B cell (primary cell): ENCODE measurements at regions of chr18 and their contacts with region 1.

Region 1: DNA sequence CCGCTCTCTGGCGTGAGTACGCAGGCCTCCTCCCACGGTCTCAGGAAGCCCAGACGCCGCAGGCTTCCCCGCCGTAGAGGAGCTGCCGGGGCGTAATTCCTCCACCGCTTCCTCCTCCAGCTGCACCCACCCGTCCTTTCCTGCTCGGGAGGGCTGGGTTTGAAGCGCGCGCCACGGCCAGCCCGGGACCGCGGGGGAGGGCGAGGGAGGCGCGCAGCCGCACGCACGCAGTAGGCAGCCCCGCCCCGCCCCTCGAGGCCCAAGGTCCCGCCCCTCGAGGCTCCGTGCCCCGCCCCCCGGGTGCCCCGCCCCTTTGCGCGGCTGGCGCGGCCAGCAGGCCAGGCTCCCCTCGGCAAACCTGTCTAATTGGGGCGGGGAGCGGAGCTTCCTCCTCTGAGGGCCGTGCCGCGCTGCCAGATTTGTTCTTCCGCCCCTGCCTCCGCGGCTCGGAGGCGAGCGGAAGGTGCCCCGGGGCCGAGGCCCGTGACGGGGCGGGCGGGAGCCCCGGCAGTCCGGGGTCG is at the start of gene MALT1:
- DNase-seq: peak; percentile 94
- ATAC-seq: peak; percentile 86
- H3K4me3 ChIP-seq: peak within 1 kb of the TSS; percentile 84 to 92 (median 87)
- H3K4me3 Mint-ChIP-seq: peak within 1 kb of the TSS; percentile 97
- H3K27ac ChIP-seq: peak within 1 kb of the TSS; percentile 73 to 88
- H3K27ac Mint-ChIP-seq: peak within 1 kb of the TSS; percentile 97
- H3K4me1 ChIP-seq: peaks cover 47 to 48% of the 10 kb centered on the region in 2 donors
- H3K4me1 Mint-ChIP-seq: peaks cover 63% of the 10 kb centered on the region
- H3K27me3 ChIP-seq: no peaks in the 10 kb centered on the region
- H3K27me3 Mint-ChIP-seq: no peaks in the 10 kb centered on the region
- CTCF ChIP-seq: no peak
- total RNA-seq, gene MALT1: 81.2 and 95.6 TPM in 2 replicates

Region 2: GRCh38 chr18:57258131-57258777 is 1412.9 kb before region 1 on chr18:
- CTCF ChIA-PET with region 1: no interaction called
- POLR2A ChIA-PET with region 1: no interaction called
- intact Hi-C with region 1: no loop called
- DNase-seq: no peak
- ATAC-seq: no peak
- H3K4me3 ChIP-seq: no peak overlapping the region
- H3K4me3 Mint-ChIP-seq: no peak overlapping the region
- H3K27ac ChIP-seq: no peak overlapping the region
- H3K27ac Mint-ChIP-seq: no peak overlapping the region
- H3K4me1 ChIP-seq: no peaks in the 10 kb centered on the region
- H3K4me1 Mint-ChIP-seq: no peaks in the 10 kb centered on the region
- H3K27me3 ChIP-seq: no peaks in the 10 kb centered on the region
- H3K27me3 Mint-ChIP-seq: peaks cover 12% of the 10 kb centered on the region
- CTCF ChIP-seq: no peak

Region 3: GRCh38 chr18:58535340-58536201 is 135.6 kb before region 1 on chr18:
- CTCF ChIA-PET with region 1: interaction called, 40 read pairs
- POLR2A ChIA-PET with region 1: interaction called, 5 read pairs
- intact Hi-C with region 1: loop called (anchors 2 kb)
- DNase-seq: peak; percentile 90
- ATAC-seq: peak; percentile 73
- H3K4me3 ChIP-seq: peak overlapping the region in 1 of 5 experiments; percentile 11
- H3K4me3 Mint-ChIP-seq: peak overlapping the region; percentile 82
- H3K27ac ChIP-seq: peak overlapping the region in 1 of 2 donors; percentile 57
- H3K27ac Mint-ChIP-seq: peak overlapping the region; percentile 77
- H3K4me1 ChIP-seq: peaks cover 47% of the 10 kb centered on the region in 2 donors
- H3K4me1 Mint-ChIP-seq: peaks cover 62% of the 10 kb centered on the region
- H3K27me3 ChIP-seq: no peaks in the 10 kb centered on the region
- H3K27me3 Mint-ChIP-seq: no peaks in the 10 kb centered on the region
- CTCF ChIP-seq: no peak

Region 4: GRCh38 chr18:58552057-58552461 is 119.1 kb before region 1 on chr18:
- CTCF ChIA-PET with region 1: interaction called, 3 read pairs
- POLR2A ChIA-PET with region 1: interaction called, 3 read pairs
- intact Hi-C with region 1: loop called (anchors 1 kb)
- DNase-seq: peak; percentile 83
- ATAC-seq: peak; percentile 80
- H3K4me3 ChIP-seq: no peak overlapping the region
- H3K4me3 Mint-ChIP-seq: peak overlapping the region; percentile 60
- H3K27ac ChIP-seq: peak overlapping the region in 1 of 2 donors; percentile 9
- H3K27ac Mint-ChIP-seq: peak overlapping the region; percentile 50
- H3K4me1 ChIP-seq: peaks cover 30 to 37% of the 10 kb centered on the region in 2 donors
- H3K4me1 Mint-ChIP-seq: peaks cover 40% of the 10 kb centered on the region
- H3K27me3 ChIP-seq: no peaks in the 10 kb centered on the region
- H3K27me3 Mint-ChIP-seq: no peaks in the 10 kb centered on the region
- CTCF ChIP-seq: no peak

Region 5: GRCh38 chr18:58649966-58650816 is 21.0 kb before region 1 on chr18:
- CTCF ChIA-PET with region 1: interaction called, 61 read pairs
- POLR2A ChIA-PET with region 1: interaction called, 3 read pairs
- intact Hi-C with region 1: loop called (anchors 2 kb)
- DNase-seq: peak; percentile 85
- ATAC-seq: peak; percentile 90
- H3K4me3 ChIP-seq: peak overlapping the region in 4 of 5 experiments; percentile 12 to 59 (median 19)
- H3K4me3 Mint-ChIP-seq: peak overlapping the region; percentile 61
- H3K27ac ChIP-seq: peak overlapping the region; percentile 48 to 69
- H3K27ac Mint-ChIP-seq: peak overlapping the region; percentile 90
- H3K4me1 ChIP-seq: peaks cover 49 to 72% of the 10 kb centered on the region in 2 donors
- H3K4me1 Mint-ChIP-seq: peaks cover 66% of the 10 kb centered on the region
- H3K27me3 ChIP-seq: no peaks in the 10 kb centered on the region
- H3K27me3 Mint-ChIP-seq: no peaks in the 10 kb centered on the region
- CTCF ChIP-seq: no peak

Region 6: DNA sequence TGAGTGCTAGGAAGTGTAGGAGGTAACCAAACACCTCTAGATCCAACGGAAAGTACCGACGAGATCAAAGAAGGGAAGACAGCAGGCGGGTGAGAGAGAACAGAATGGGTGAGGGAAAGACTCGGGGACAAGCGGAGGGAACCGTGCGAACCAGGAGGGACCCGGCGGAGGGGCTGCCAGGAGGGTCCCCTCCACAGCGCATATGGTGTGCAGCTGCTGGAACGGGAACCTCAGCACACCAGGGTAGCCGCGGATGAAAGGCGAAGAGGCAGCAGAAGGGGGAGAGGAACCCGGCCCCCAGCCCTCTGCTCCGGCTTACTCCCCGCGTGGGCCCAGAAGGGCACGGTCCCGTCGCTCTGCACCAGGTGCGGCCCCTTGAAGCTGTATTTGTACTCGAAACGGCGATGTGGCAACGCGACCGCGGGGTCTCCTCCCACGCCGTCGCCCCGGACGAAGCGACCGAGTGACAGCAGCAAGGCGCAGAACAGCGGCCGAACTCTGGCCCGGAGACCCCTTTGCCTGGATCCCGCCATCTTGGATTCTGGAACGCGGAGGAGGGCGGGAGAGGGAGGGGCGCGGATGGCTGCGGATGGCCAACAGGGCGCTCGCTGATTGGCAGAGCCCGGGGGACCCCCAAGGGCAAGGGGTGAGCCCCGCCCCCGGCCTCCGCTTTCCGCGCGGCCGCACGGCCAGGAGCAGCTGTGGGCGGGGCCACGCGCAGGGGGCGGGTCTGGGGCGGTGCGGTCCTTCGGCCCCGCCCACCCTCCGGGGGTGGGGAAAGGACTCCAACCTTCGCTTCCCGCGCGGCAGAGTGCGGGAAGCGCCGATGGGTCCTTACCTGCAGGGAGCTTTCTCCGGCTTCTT is 687.8 kb after region 1 on chr18 and contains the start of gene LMAN1:
- CTCF ChIA-PET with region 1: no interaction called
- POLR2A ChIA-PET with region 1: no interaction called
- intact Hi-C with region 1: loop called (anchors 1 kb)
- DNase-seq: peak; percentile 91
- ATAC-seq: peak; percentile 96
- H3K4me3 ChIP-seq: peak within 1 kb of the TSS; percentile 72 to 93 (median 81)
- H3K4me3 Mint-ChIP-seq: peak within 1 kb of the TSS; percentile 96
- H3K27ac ChIP-seq: peak within 1 kb of the TSS; percentile 56 to 80
- H3K27ac Mint-ChIP-seq: peak within 1 kb of the TSS; percentile 90
- H3K4me1 ChIP-seq: peaks cover 16 to 21% of the 10 kb centered on the region in 2 donors
- H3K4me1 Mint-ChIP-seq: peaks cover 36% of the 10 kb centered on the region
- H3K27me3 ChIP-seq: no peaks in the 10 kb centered on the region
- H3K27me3 Mint-ChIP-seq: peaks cover 5% of the 10 kb centered on the region
- CTCF ChIP-seq: no peak
- total RNA-seq, gene LMAN1: 41.1 and 48.8 TPM in 2 replicates